Activated CD4-positive, alpha-beta memory T cell treated with anti-CD3 and anti-CD28 coated beads for 36 hours (primary cell): ENCODE measurements at regions of chr7 and their contacts with region 1.

Region 1: GRCh38 chr7:90424720-90425119 is 21.5 kb downstream of the CLDN12 start:
- DNase-seq: no peak
- H3K4me3 Mint-ChIP-seq: no peak overlapping the region
- H3K27ac Mint-ChIP-seq: peak overlapping the region; percentile 48
- H3K4me1 Mint-ChIP-seq: peaks cover 15% of the 10 kb centered on the region
- H3K27me3 Mint-ChIP-seq: no peaks in the 10 kb centered on the region

Region 2: GRCh38 chr7:90155206-90155605 is 269.5 kb before region 1 on chr7:
- CTCF ChIA-PET with region 1: interaction called, 101 read pairs
- POLR2A ChIA-PET with region 1: no interaction called
- intact Hi-C with region 1: loop called (anchors 1 kb)
- DNase-seq: no peak
- H3K4me3 Mint-ChIP-seq: no peak overlapping the region
- H3K27ac Mint-ChIP-seq: no peak overlapping the region
- H3K4me1 Mint-ChIP-seq: peaks cover 3% of the 10 kb centered on the region
- H3K27me3 Mint-ChIP-seq: peaks cover 27% of the 10 kb centered on the region

Region 3: GRCh38 chr7:90244909-90245851 is 179.5 kb before region 1 on chr7 and contains the start of gene CFAP69:
- CTCF ChIA-PET with region 1: interaction called, 4 read pairs
- POLR2A ChIA-PET with region 1: no interaction called
- intact Hi-C with region 1: loop called (anchors 5 kb)
- DNase-seq: peak; percentile 90
- H3K4me3 Mint-ChIP-seq: peak within 1 kb of the TSS; percentile 83
- H3K27ac Mint-ChIP-seq: peak within 1 kb of the TSS; percentile 13
- H3K4me1 Mint-ChIP-seq: peaks cover 18% of the 10 kb centered on the region
- H3K27me3 Mint-ChIP-seq: peaks cover 23% of the 10 kb centered on the region
- total RNA-seq, gene CFAP69: 0.48 TPM in 1 of 2 experiments, not detected in the other

Region 4: GRCh38 chr7:90312745-90313144 is 112.0 kb before region 1 on chr7:
- CTCF ChIA-PET with region 1: interaction called, 35 read pairs
- POLR2A ChIA-PET with region 1: no interaction called
- intact Hi-C with region 1: loop called (anchors 1 kb)
- DNase-seq: no peak
- H3K4me3 Mint-ChIP-seq: no peak overlapping the region
- H3K27ac Mint-ChIP-seq: no peak overlapping the region
- H3K4me1 Mint-ChIP-seq: no peaks in the 10 kb centered on the region
- H3K27me3 Mint-ChIP-seq: peaks cover 7% of the 10 kb centered on the region

Region 5: DNA sequence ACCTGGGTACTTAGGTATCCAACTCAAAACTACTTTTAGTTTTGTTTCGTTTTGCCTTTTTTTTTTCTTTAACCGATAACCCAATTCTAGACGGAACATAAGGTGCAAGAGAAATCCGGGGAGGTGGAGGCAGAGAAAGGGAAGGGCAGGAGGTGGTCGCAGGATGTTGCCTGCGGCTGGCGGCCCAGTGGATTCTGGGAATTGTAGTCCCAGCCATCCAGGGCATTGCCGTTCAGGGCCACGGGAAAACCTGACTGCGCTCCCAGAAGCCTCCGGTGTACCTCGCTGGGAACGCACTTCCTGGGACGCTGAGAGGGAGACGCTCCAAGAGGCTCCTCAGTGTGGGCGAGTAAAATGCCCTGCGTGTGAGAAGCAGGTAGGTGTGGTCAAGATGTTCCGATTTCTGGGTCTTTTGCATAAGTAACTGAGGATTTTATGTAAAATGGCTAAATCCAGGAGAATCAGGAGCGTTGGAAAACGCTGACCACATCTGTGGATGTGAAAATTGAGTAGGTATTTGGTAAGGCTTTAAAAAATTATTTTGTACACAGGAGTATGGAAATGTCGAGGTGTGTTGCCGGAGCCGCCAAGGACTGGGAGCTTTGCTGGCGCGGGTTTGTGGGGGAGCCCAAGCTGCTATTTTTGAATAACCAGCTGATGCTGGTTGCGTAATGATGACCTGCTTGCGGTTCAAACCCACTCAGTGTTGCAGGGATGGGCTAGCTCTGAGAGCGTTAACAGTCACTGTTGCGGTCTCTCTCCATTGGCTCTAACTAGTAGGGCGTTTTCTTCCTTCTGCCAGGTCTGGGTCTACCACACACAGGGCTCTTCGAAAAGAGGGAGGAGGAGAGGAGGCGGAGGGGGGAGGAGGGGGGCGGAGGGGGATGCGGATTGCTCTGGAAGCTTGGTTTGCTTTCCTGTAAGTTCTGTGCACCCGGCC is 21.3 kb before region 1 on chr7 and contains the start of gene CLDN12:
- CTCF ChIA-PET with region 1: interaction called, 3 read pairs
- POLR2A ChIA-PET with region 1: interaction called, 6 read pairs
- intact Hi-C with region 1: loop called (anchors 1 kb)
- DNase-seq: peak; percentile 89
- H3K4me3 Mint-ChIP-seq: peak within 1 kb of the TSS; percentile 84
- H3K27ac Mint-ChIP-seq: peak within 1 kb of the TSS; percentile 80
- H3K4me1 Mint-ChIP-seq: peaks cover 11% of the 10 kb centered on the region
- H3K27me3 Mint-ChIP-seq: no peaks in the 10 kb centered on the region
- total RNA-seq, gene CLDN12: 6.9 to 8.3 TPM

Region 6: GRCh38 chr7:90613088-90613498 is 188.4 kb after region 1 on chr7:
- CTCF ChIA-PET with region 1: no interaction called
- POLR2A ChIA-PET with region 1: no interaction called
- intact Hi-C with region 1: loop called (anchors 1 kb)
- DNase-seq: peak; percentile 27
- H3K4me3 Mint-ChIP-seq: no peak overlapping the region
- H3K27ac Mint-ChIP-seq: no peak overlapping the region
- H3K4me1 Mint-ChIP-seq: peaks cover 8% of the 10 kb centered on the region
- H3K27me3 Mint-ChIP-seq: peaks cover 7% of the 10 kb centered on the region

Region 7: GRCh38 chr7:90980545-90980944 is 555.8 kb after region 1 on chr7:
- CTCF ChIA-PET with region 1: no interaction called
- POLR2A ChIA-PET with region 1: no interaction called
- intact Hi-C with region 1: no loop called
- DNase-seq: no peak
- H3K4me3 Mint-ChIP-seq: no peak overlapping the region
- H3K27ac Mint-ChIP-seq: no peak overlapping the region
- H3K4me1 Mint-ChIP-seq: no peaks in the 10 kb centered on the region
- H3K27me3 Mint-ChIP-seq: no peaks in the 10 kb centered on the region